Aorta (tissue), 5 donors: ENCODE measurements at regions of chr20 and their contacts with region 1.

Region 1: GRCh38 chr20:24160563-24161375 is 172.2 kb upstream of the GGTLC1 start:
- DNase-seq: peak; percentile 64 to 83
- ATAC-seq: peak; percentile 64
- H3K4me3 ChIP-seq: no peak overlapping the region
- H3K27ac ChIP-seq: no peak overlapping the region
- H3K4me1 ChIP-seq: no peaks in the 10 kb centered on the region
- H3K27me3 ChIP-seq: no peaks in the 10 kb centered on the region

Region 2: GRCh38 chr20:24469116-24469893 is 308.5 kb after region 1 on chr20 and contains the start of gene SYNDIG1:
- intact Hi-C with region 1: loop called in 1 of 2 experiments (anchors 10 kb)
- DNase-seq: peak in 1 of 2 donors; percentile 83
- ATAC-seq: peak; percentile 57
- H3K4me3 ChIP-seq: peak within 1 kb of the TSS; percentile 69 to 81
- H3K27ac ChIP-seq: peak within 1 kb of the TSS in 1 of 2 donors; percentile 24
- H3K4me1 ChIP-seq: no peaks in the 10 kb centered on the region
- H3K27me3 ChIP-seq: no peaks in the 10 kb centered on the region
- total RNA-seq, gene SYNDIG1: 4.5 to 6.2 TPM

Region 3: DNA sequence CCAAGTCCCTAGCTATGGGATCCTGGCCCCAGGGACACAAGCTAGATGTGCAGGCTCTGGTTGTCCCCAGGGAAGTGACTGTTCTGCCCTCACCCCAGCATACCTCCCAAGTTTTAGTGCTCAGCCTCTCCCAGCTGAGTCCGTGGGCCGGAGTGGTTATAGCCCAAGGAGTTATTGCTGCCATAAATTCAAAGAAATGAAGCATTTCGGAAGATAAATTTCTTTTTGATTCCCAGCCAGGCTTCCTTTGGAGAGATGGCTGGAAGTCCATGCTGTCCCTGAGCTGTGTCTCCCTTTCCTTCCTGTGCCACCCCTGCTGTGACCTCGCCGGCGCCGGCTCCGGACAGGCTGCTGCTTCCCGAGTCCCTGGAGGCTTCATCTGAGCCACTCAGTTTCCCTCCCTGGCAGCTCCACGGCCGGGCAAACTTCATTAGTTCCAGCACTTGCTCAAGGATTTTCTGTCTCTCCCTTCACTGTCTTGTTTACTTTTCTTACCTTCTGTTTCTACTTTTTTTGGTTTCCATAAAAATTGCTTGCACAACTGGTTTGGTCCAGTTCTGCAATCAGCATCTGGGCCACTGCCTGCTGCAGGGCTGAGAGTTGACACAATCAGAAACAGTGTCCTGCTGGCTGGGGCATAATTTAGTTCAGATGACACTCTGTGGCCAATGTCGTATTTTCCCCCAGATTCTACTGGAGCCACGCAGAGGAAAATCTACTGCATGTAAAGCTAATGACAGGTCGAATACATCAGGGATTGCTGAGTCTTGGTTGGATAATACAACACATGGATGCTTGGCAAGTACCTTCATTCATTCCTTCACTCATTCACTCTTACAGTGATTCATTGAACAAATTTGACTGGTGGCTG is 534.2 kb after region 1 on chr20:
- intact Hi-C with region 1: loop called in 1 of 2 experiments (anchors 5 kb)
- DNase-seq: peak in 1 of 2 donors; percentile 77
- ATAC-seq: peak; percentile 19
- H3K4me3 ChIP-seq: no peak overlapping the region
- H3K27ac ChIP-seq: no peak overlapping the region
- H3K4me1 ChIP-seq: no peaks in the 10 kb centered on the region
- H3K27me3 ChIP-seq: no peaks in the 10 kb centered on the region

Region 4: DNA sequence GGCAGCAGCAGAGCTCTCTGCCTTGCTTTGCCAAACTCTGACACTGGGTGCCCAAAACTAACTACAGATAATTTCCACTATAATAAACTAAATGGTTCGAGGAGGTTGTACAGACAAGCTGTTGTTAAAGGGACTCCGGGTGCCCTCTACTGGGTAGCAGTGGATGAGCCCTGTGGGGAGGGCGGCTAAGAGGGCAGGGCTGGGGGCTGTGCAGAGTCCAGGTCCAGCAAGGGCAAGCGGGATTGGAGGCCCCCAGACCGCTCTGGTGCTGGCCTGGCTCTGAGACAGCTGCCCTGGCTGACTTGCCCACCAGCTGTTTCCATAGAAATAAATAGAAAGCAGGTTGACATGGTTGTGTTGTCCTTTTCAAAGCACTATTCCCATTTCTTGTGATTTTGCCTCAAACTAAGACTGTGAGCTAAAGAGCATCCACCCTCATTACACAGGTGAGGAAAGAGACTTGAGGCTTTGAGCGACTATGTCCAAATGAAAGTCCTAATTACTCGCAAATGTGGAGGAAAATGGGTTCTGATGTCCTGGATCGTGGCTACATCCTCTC is 620.7 kb after region 1 on chr20:
- intact Hi-C with region 1: loop called (anchors 5 to 10 kb)
- DNase-seq: peak in 1 of 2 donors; percentile 75
- ATAC-seq: no peak
- H3K4me3 ChIP-seq: no peak overlapping the region
- H3K27ac ChIP-seq: no peak overlapping the region
- H3K4me1 ChIP-seq: no peaks in the 10 kb centered on the region
- H3K27me3 ChIP-seq: no peaks in the 10 kb centered on the region

Region 5: GRCh38 chr20:24917797-24918578 is 757.2 kb after region 1 on chr20:
- intact Hi-C with region 1: loop called (anchors 2 to 5 kb)
- DNase-seq: peak; percentile 79 to 90
- ATAC-seq: peak; percentile 94
- H3K4me3 ChIP-seq: no peak overlapping the region
- H3K27ac ChIP-seq: no peak overlapping the region
- H3K4me1 ChIP-seq: no peaks in the 10 kb centered on the region
- H3K27me3 ChIP-seq: no peaks in the 10 kb centered on the region